ENCODE measurements at regions of chr16 and their contacts with region 1.

Region 1: GRCh38 chr16:30844671-30845449 is 49.0 kb downstream of the BCL7C start:
- DNase-seq: peak; percentile 86 to 96 (median 87)
- ATAC-seq: peak; percentile 96
- H3K4me3 ChIP-seq: no peak overlapping the region
- H3K27ac ChIP-seq: peak overlapping the region; percentile 46; the same call in 2 of the 3 replicates
- H3K4me1 ChIP-seq: peaks cover 4 to 8% of the 10 kb centered on the region in 2 experiments; a peak in 2 of 5 replicates
- H3K27me3 ChIP-seq: no peaks in the 10 kb centered on the region
- CTCF ChIP-seq: peak; percentile 89 to 98 (median 94)
- EP300 ChIP-seq: peak; percentile 13; the same call in 1 of the 2 replicates
- POLR2A ChIP-seq: no peak
- RAD21 ChIP-seq: peak; percentile 94 to 96

Region 2: GRCh38 chr16:30710971-30711370 is 133.9 kb before region 1 on chr16:
- CTCF ChIA-PET with region 1: no interaction called
- POLR2A ChIA-PET with region 1: no interaction called
- in situ Hi-C with region 1: no loop called
- intact Hi-C with region 1: no loop called
- DNase-seq: no peak
- ATAC-seq: no peak
- H3K4me3 ChIP-seq: no peak overlapping the region
- H3K27ac ChIP-seq: no peak overlapping the region
- H3K4me1 ChIP-seq: no peaks in the 10 kb centered on the region
- H3K27me3 ChIP-seq: no peaks in the 10 kb centered on the region
- CTCF ChIP-seq: no peak
- EP300 ChIP-seq: no peak
- POLR2A ChIP-seq: no peak
- RAD21 ChIP-seq: no peak

Region 3: DNA sequence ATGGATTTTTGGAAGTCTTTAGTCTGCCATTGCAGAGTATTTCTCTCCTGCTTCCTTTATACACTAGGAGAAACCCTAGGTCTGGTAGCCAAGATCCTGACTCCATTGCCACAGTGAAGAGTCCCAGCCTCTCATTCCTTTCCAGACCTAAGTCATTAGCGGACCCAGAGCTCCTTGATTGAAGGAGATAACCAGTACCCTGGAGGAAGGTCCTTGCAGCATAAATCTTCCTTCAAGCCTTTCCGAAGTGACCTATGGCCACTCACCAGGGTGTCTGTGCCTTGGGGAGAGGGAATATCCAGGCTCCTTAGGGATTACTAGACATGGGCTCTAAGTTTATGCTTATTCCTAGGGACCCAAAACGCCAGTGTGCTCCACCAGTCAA is 13.2 kb after region 1 on chr16:
- CTCF ChIA-PET with region 1: no interaction called
- POLR2A ChIA-PET with region 1: interaction called, 13 read pairs
- in situ Hi-C with region 1: no loop called
- intact Hi-C with region 1: no loop called
- DNase-seq: no peak
- ATAC-seq: no peak
- H3K4me3 ChIP-seq: no peak overlapping the region
- H3K27ac ChIP-seq: no peak overlapping the region
- H3K4me1 ChIP-seq: peaks cover 0 to 6% of the 10 kb centered on the region in 2 experiments; a peak in 4 of 5 replicates
- H3K27me3 ChIP-seq: no peaks in the 10 kb centered on the region
- CTCF ChIP-seq: no peak
- EP300 ChIP-seq: no peak
- POLR2A ChIP-seq: no peak
- RAD21 ChIP-seq: no peak

Region 4: DNA sequence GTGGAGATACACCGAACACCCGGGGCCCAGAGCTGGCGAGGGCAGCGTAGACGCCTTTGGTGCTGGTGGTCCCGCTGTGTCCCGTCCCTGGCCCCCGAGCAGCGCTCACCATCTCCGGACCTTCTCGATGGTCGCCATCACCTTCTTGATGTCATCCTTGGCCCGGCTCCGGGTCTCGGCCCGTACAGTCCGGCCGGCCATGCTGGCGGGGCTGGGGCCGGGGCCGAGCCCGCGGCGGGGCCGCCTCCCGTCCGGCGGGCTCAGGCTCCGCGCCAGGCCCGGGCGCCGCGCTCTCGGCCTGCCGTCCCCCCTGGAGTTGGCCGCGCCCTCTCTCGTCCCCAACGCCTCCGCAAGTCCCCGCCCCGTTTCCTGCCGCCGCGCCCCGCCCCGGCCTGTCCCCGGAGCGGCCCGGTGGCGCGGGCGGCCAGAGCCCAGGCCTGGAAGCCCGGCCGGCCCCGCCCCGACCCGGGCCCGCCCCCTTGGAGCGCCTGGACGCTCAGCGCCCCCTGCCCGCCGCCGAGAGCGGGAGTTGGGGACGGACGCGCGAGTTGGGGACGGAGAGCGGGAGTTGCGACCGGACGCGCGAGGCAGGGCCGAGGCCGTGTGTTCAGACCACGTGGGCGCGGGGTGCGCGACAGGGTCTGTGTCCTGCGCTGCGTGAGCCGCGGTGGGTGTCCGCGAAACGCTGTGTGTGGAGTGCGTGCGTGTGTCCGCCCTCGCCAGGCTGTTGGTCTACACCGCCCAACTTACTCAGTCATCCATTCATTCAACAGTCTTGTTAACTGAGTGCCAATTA is 49.1 kb after region 1 on chr16 and contains the start of gene BCL7C:
- CTCF ChIA-PET with region 1: interaction called, 7 read pairs
- POLR2A ChIA-PET with region 1: interaction called, 4 read pairs
- in situ Hi-C with region 1: no loop called
- intact Hi-C with region 1: loop called (anchors 2 kb)
- DNase-seq: peak; percentile 91 to 95 (median 92)
- ATAC-seq: peak; percentile 86
- H3K4me3 ChIP-seq: peak within 1 kb of the TSS; percentile 67
- H3K27ac ChIP-seq: peak within 1 kb of the TSS; percentile 90
- H3K4me1 ChIP-seq: peaks cover 35 to 47% of the 10 kb centered on the region in 2 experiments
- H3K27me3 ChIP-seq: no peaks in the 10 kb centered on the region
- CTCF ChIP-seq: peak; percentile 41 to 75 (median 59); a peak in 5 of 6 replicates
- EP300 ChIP-seq: no peak
- POLR2A ChIP-seq: peak; percentile 76
- RAD21 ChIP-seq: peak; percentile 37 to 52
- polyA plus RNA-seq, gene BCL7C: 1.7 to 2.6 TPM

Region 5: DNA sequence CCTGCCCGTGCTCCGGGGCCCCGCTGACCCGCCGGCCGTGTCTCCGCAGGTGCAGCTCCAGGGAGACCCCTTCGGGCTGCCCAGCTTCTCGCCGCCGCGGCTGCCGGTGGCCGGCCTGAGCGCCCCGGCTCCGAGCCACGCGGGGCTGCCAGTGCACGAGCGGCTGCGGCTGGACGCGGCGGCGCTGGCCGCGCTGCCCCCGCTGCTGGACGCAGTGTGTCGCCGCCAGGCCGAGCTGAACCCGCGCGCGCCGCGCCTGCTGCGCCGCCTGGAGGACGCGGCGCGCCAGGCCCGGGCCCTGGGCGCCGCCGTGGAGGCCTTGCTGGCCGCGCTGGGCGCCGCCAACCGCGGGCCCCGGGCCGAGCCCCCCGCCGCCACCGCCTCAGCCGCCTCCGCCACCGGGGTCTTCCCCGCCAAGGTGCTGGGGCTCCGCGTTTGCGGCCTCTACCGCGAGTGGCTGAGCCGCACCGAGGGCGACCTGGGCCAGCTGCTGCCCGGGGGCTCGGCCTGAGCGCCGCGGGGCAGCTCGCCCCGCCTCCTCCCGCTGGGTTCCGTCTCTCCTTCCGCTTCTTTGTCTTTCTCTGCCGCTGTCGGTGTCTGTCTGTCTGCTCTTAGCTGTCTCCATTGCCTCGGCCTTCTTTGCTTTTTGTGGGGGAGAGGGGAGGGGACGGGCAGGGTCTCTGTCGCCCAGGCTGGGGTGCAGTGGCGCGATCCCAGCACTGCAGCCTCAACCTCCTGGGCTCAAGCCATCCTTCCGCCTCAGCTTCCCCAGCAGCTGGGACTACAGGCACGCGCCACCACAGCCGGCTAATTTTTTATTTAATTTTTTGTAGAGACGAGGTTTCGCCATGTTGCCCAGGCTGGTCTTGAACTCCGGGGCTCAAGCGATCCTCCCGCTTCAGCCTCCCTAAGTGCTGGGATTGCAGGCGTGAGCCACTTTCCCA is 57.4 kb after region 1 on chr16:
- CTCF ChIA-PET with region 1: interaction called, 5 read pairs
- POLR2A ChIA-PET with region 1: interaction called, 4 read pairs
- in situ Hi-C with region 1: loop called (anchors 10 kb)
- intact Hi-C with region 1: no loop called
- DNase-seq: peak; percentile 86 to 89 (median 88)
- ATAC-seq: peak; percentile 94
- H3K4me3 ChIP-seq: peak overlapping the region; percentile 57
- H3K27ac ChIP-seq: peak overlapping the region; percentile 87
- H3K4me1 ChIP-seq: peaks cover 27 to 33% of the 10 kb centered on the region in 2 experiments
- H3K27me3 ChIP-seq: no peaks in the 10 kb centered on the region
- CTCF ChIP-seq: peak; percentile 7 to 91 (median 64); a peak in 5 of 6 replicates
- EP300 ChIP-seq: no peak
- POLR2A ChIP-seq: peak; percentile 60
- RAD21 ChIP-seq: peak in 1 of 2 experiments; percentile 76; a peak in 3 of 4 replicates

Region 6: DNA sequence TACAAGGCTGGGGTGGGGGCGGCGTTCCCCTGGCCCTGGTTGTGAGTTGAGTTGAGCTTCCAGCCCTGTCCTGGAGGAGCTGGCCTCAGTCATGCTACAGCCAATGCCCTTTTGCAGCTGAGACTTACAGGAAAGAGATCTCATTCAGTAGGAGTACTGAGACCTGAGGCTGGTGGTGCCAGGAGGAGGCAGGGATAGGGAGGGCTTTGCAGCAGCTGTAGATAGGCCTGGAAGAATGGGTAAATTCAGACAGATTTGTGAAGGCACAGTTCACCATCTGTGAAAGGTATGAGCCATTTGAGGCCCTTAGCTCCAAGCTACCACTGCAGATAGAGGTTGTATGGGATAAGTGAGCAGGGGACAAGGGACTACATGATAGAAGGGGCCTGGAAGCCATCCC is 194.1 kb after region 1 on chr16:
- CTCF ChIA-PET with region 1: no interaction called
- POLR2A ChIA-PET with region 1: no interaction called
- in situ Hi-C with region 1: no loop called
- intact Hi-C with region 1: no loop called
- DNase-seq: no peak
- ATAC-seq: no peak
- H3K4me3 ChIP-seq: no peak overlapping the region
- H3K27ac ChIP-seq: no peak overlapping the region
- H3K4me1 ChIP-seq: peaks cover 9 to 17% of the 10 kb centered on the region in 2 experiments; a peak in 4 of 5 replicates
- H3K27me3 ChIP-seq: no peaks in the 10 kb centered on the region
- CTCF ChIP-seq: no peak
- EP300 ChIP-seq: no peak
- POLR2A ChIP-seq: no peak
- RAD21 ChIP-seq: no peak